IMR-90 (cell line): ENCODE measurements at regions of chr3 and their contacts with region 1.

Region 1: DNA sequence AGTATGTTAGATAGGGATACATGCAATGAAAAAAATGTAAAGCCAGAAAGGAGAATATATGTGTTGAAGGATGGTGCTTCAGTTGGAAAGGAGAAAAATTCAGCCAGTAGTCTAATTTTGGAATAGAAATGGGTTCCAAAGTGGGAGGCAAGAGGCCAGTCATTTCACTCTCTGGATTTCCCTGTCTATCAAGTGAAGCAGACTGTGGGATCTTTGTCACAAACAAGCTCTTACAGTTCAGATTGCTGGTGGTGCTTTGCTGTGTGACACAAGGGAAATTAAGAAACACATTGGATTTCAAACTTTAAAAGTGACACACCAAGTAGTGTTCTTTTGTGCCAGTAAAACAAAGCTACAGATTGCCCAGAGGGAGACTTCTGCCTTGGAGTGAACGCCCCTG is 82.0 kb upstream of the BFSP2 start:
- DNase-seq: no peak
- ATAC-seq: no peak
- H3K4me3 ChIP-seq: no peak overlapping the region
- H3K27ac ChIP-seq: no peak overlapping the region
- H3K4me1 ChIP-seq: no peaks in the 10 kb centered on the region
- H3K27me3 ChIP-seq: peaks cover 3% of the 10 kb centered on the region
- CTCF ChIP-seq: no peak
- POLR2A ChIP-seq: no peak
- RAD21 ChIP-seq: no peak

Region 2: GRCh38 chr3:133230195-133230594 is 87.7 kb before region 1 on chr3:
- CTCF ChIA-PET with region 1: no interaction called
- POLR2A ChIA-PET with region 1: no interaction called
- dilution Hi-C with region 1: no loop called
- in situ Hi-C with region 1: no loop called
- intact Hi-C with region 1: no loop called
- DNase-seq: no peak
- ATAC-seq: no peak
- H3K4me3 ChIP-seq: no peak overlapping the region
- H3K27ac ChIP-seq: no peak overlapping the region
- H3K4me1 ChIP-seq: no peaks in the 10 kb centered on the region
- H3K27me3 ChIP-seq: no peaks in the 10 kb centered on the region
- CTCF ChIP-seq: no peak
- POLR2A ChIP-seq: no peak
- RAD21 ChIP-seq: no peak

Region 3: GRCh38 chr3:133268726-133269134 is 49.1 kb before region 1 on chr3:
- CTCF ChIA-PET with region 1: no interaction called
- POLR2A ChIA-PET with region 1: no interaction called
- dilution Hi-C with region 1: no loop called
- in situ Hi-C with region 1: no loop called
- intact Hi-C with region 1: loop called (anchors 5 kb)
- DNase-seq: no peak
- ATAC-seq: no peak
- H3K4me3 ChIP-seq: no peak overlapping the region
- H3K27ac ChIP-seq: no peak overlapping the region
- H3K4me1 ChIP-seq: peaks cover 5% of the 10 kb centered on the region
- H3K27me3 ChIP-seq: no peaks in the 10 kb centered on the region; the same call in 1 of the 2 replicates
- CTCF ChIP-seq: no peak
- POLR2A ChIP-seq: no peak
- RAD21 ChIP-seq: no peak

Region 4: GRCh38 chr3:133734305-133734704 is 416.4 kb after region 1 on chr3:
- CTCF ChIA-PET with region 1: no interaction called
- POLR2A ChIA-PET with region 1: no interaction called
- dilution Hi-C with region 1: no loop called
- in situ Hi-C with region 1: no loop called
- intact Hi-C with region 1: no loop called
- DNase-seq: no peak
- ATAC-seq: no peak
- H3K4me3 ChIP-seq: no peak overlapping the region
- H3K27ac ChIP-seq: no peak overlapping the region
- H3K4me1 ChIP-seq: no peaks in the 10 kb centered on the region
- H3K27me3 ChIP-seq: no peaks in the 10 kb centered on the region; the same call in 1 of the 2 replicates
- CTCF ChIP-seq: no peak
- POLR2A ChIP-seq: no peak
- RAD21 ChIP-seq: no peak